BJ (cell line): ENCODE measurements at regions of chr9 and their contacts with region 1.

Region 1: GRCh38 chr9:121686930-121687541 is 35.6 kb downstream of the DAB2IP start:
- DNase-seq: no peak
- H3K4me3 ChIP-seq: no peak overlapping the region
- H3K27me3 ChIP-seq: no peaks in the 10 kb centered on the region
- CTCF ChIP-seq: peak; percentile 95

Region 2: GRCh38 chr9:121557581-121558447 is 129.2 kb before region 1 on chr9:
- CTCF ChIA-PET with region 1: interaction called, 18 read pairs
- POLR2A ChIA-PET with region 1: no interaction called
- DNase-seq: peak; percentile 78
- H3K4me3 ChIP-seq: no peak overlapping the region
- H3K27me3 ChIP-seq: peaks cover 3% of the 10 kb centered on the region
- CTCF ChIP-seq: no peak

Region 3: DNA sequence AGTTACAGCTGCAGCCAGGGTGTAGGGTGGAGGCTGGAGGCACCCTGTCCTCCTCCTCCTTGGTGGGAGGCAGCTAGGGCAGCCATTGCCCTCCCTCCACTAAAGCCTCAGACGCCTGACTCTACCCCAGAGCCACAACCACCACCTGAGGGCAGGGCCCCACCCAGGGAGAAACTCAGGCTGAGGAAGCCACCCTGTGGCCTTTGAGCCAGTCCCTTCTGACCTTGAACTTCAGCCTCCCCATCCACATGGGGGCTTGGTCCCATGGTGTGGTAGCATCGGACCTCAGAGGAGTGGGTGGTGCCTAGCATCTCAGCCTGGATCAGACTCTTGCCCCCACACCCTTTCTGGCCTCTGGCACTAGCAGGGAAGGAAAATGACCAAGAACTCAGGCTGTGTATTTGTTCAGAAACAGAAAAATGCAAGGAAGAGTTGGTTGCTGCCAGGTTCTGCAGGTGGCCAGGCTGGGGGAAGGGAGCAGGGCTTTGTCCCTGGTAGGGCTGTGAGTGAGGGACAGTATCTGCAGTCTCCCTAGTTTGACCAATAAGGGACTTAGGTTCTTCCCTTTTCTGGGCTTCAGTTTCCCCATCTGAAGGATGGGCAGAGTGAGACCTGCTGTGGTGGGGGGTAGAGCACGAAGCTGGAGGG is 32.4 kb before region 1 on chr9:
- CTCF ChIA-PET with region 1: interaction called, 13 read pairs
- POLR2A ChIA-PET with region 1: no interaction called
- DNase-seq: no peak
- H3K4me3 ChIP-seq: no peak overlapping the region
- H3K27me3 ChIP-seq: no peaks in the 10 kb centered on the region; the same call in none of the 2 replicates
- CTCF ChIP-seq: no peak

Region 4: GRCh38 chr9:121674952-121675351 is 12.1 kb before region 1 on chr9:
- CTCF ChIA-PET with region 1: interaction called, 11 read pairs
- POLR2A ChIA-PET with region 1: no interaction called
- DNase-seq: no peak
- H3K4me3 ChIP-seq: no peak overlapping the region
- H3K27me3 ChIP-seq: no peaks in the 10 kb centered on the region
- CTCF ChIP-seq: no peak

Region 5: DNA sequence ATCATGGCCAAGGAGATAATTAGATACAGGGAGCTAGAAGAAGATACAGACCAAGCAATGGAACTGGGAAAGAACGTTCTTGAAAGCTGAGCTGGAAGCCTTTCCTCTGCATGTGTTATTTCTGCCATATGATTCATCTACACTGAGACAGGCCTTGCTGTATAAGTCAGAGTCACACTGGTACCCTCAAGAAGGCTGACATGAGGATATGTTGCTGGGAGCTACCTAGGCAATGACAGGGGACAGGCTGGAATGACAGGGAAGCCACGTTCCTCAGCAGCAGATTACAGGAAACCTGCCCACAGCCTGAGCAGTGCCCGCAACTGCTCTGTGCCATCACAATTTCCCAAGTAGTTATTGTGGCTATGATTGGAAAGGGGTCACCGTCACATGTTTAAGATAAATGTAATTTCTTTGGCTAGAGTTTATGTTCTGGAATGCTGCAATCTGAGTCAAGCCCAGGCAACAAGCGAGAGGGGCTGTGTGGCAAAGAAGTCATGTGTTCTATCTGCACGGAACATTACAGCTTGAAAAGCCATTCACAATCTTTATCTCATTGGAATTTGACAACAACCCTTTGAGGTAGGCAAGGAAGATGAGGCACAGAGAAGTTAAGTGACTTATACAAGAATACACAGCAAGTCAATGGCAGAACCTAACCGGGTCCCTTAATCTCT is 297.8 kb after region 1 on chr9:
- CTCF ChIA-PET with region 1: interaction called, 15 read pairs
- POLR2A ChIA-PET with region 1: no interaction called
- DNase-seq: peak; percentile 82
- H3K4me3 ChIP-seq: no peak overlapping the region
- H3K27me3 ChIP-seq: no peaks in the 10 kb centered on the region
- CTCF ChIP-seq: no peak